ENCODE measurements at regions of chr9 and their contacts with region 1.

Region 1: DNA sequence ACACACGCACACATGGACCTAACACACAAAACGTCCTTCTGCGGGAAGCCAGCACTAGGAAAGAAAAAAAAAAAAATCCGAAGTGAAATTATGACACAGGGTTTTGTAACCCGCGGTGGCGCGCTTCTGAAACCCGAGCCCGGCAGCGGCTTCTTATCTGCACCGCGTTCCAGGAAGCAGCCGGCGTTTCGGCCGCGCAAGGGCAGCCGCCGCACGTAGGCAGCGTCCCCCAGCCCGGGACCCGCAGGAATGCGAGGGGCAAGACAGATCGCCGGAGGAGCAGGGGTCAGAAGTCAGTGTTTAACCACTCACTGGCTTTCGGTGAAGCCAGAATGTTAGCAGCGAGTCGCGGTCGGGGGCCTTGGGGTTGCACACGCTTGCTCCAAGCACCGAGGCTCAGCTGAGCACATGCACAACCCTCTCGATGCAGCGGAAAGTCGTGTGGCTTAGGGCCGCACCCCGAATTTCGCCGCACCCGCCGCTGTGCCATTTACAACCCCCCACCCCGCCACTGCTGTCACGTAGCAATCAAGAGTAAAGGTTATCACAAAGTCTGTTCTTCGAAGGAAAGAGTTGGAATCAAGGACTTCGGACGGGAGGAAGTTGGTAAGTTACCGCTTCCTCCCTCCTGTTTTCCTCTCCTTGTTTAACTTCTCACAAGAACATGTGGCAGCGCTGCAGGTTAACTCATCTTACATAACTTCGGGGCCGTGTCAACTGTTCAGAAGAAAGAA is 167.9 kb downstream of the AUH start:
- DNase-seq: peak; percentile 77
- H3K4me3 Mint-ChIP-seq: peak overlapping the region; percentile 71
- H3K27ac Mint-ChIP-seq: peak overlapping the region; percentile 95
- H3K4me1 Mint-ChIP-seq: peaks cover 80% of the 10 kb centered on the region
- H3K27me3 Mint-ChIP-seq: no peaks in the 10 kb centered on the region

Region 2: DNA sequence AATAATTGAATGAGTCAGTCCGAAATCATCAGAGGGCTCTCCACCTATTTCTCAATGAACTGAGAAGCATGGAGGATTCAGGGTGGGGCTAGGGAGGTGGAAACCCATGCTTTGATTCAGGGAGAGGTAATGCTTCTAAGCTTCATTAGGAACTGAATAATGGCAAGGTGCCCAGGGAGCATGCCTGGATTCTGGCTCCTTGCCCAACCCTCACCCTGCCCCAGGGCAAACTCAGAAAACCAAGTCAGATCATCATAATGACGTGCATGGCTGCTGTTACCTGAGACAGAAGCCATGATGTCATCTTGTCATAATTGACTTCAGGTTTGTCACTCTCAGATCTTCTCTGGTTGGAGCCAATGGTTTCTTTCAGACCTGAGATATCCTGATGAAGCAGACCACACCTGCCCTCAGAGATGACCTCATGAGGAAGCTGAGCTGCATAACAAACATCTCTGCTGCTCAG is 192.6 kb before region 1 on chr9:
- intact Hi-C with region 1: no loop called
- DNase-seq: no peak
- H3K4me3 Mint-ChIP-seq: no peak overlapping the region
- H3K27ac Mint-ChIP-seq: no peak overlapping the region
- H3K4me1 Mint-ChIP-seq: no peaks in the 10 kb centered on the region
- H3K27me3 Mint-ChIP-seq: peaks cover 2% of the 10 kb centered on the region

Region 3: GRCh38 chr9:91036826-91037510 is 156.9 kb before region 1 on chr9:
- intact Hi-C with region 1: loop called (anchors 1 kb)
- DNase-seq: peak; percentile 69
- H3K4me3 Mint-ChIP-seq: peak overlapping the region; percentile 35
- H3K27ac Mint-ChIP-seq: peak overlapping the region; percentile 70
- H3K4me1 Mint-ChIP-seq: peaks cover 61% of the 10 kb centered on the region
- H3K27me3 Mint-ChIP-seq: peaks cover 3% of the 10 kb centered on the region

Region 4: GRCh38 chr9:91101611-91102168 is 92.1 kb before region 1 on chr9:
- intact Hi-C with region 1: loop called (anchors 1 kb)
- DNase-seq: peak; percentile 85
- H3K4me3 Mint-ChIP-seq: peak overlapping the region; percentile 53
- H3K27ac Mint-ChIP-seq: peak overlapping the region; percentile 85
- H3K4me1 Mint-ChIP-seq: peaks cover 72% of the 10 kb centered on the region
- H3K27me3 Mint-ChIP-seq: peaks cover 8% of the 10 kb centered on the region

Region 5: DNA sequence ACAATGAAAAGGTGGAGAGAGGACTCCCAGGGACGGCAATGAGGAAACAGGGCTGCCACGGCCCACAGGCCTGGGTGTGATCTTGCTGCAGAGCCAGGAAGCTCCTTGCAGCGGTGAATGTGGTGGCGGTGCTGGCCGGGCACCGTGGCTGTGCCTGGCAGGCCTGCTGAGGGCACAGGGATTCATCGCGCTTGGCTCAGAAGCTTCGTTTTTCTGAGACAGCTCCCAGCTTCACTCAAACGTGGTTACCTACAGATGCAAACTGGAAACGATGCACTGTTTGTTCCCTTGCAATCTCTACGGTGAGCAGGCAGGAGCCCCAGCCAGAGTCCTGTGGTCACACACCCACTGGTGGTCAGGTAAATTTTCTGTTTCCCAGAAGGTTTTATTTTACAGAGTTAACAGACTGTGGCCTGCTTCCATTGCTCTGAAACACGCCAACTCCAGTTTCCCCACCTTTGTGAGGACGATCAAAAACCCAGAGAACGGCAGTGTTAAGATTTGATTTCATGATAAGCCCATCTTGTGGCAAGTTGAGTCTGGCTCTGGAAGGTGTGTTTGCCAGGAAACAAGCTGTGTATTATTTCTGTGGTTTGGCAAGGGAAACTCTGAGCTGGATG is 16.1 kb before region 1 on chr9:
- intact Hi-C with region 1: loop called (anchors 1 kb)
- DNase-seq: no peak
- H3K4me3 Mint-ChIP-seq: peak overlapping the region; percentile 35
- H3K27ac Mint-ChIP-seq: peak overlapping the region; percentile 96
- H3K4me1 Mint-ChIP-seq: peaks cover 71% of the 10 kb centered on the region
- H3K27me3 Mint-ChIP-seq: no peaks in the 10 kb centered on the region

Region 6: GRCh38 chr9:91346652-91347051 is 152.8 kb after region 1 on chr9:
- intact Hi-C with region 1: loop called (anchors 1 kb)
- DNase-seq: no peak
- H3K4me3 Mint-ChIP-seq: no peak overlapping the region
- H3K27ac Mint-ChIP-seq: peak overlapping the region; percentile 67
- H3K4me1 Mint-ChIP-seq: peaks cover 56% of the 10 kb centered on the region
- H3K27me3 Mint-ChIP-seq: no peaks in the 10 kb centered on the region

Region 7: DNA sequence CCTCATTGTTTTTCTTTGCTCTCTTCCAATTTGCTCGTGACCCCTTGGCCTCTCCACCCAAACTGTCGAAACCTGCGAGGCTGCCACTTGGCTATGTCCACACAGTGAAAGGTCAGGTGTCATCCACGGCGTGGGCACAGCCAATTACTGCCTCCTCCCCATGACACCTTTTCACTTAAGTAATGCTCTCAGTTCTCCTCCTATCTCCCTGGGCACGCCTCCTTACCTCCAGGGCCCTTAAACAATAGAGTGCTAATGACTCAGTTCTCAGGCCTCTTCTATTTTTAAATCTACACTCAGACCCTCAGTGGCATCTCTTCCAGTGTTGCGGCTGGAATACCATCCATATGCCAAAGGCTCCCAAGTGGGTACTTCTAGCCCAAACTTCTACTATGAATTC is 499.4 kb after region 1 on chr9:
- intact Hi-C with region 1: no loop called
- DNase-seq: no peak
- H3K4me3 Mint-ChIP-seq: no peak overlapping the region
- H3K27ac Mint-ChIP-seq: no peak overlapping the region
- H3K4me1 Mint-ChIP-seq: no peaks in the 10 kb centered on the region
- H3K27me3 Mint-ChIP-seq: peaks cover 7% of the 10 kb centered on the region

Region 8: DNA sequence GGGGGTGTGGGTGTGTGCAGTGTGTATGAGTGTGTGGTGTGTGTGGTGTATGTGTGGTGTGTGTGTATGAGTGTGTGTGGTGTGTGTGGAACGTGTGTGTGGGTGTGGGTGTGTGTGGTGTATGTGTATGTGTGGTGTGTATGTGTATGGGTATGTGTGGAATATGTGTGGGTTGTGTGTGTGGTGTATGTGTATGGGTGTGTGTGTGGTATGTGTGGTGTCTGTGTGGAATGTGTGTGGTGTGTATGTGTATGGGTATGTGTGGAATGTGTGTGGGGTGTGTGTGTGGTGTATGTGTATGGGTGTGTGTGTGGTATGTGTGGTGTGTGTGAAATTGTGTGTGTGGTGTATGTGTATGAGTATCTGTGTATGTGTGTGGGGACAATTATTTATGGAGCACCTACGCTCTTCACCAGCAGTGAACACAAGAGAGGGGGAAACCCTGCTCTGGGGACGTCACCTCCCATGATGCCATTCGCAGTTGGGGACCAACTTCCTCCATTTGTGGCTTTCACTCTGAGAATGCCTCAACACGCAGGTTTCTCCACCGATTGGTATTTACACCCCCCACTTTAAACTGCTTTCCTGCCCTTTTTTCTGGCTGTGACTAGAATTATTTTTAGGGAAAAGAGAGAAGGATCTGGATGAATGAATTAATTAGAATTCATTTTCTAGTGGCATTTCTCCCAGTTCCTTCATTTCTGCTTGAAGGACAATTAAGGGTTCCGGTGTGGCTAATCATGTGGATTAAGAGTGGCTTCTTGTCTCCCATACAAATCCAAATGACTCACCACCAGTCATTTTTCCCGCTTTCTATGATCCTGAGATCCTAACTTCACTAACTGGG is 518.2 kb after region 1 on chr9:
- intact Hi-C with region 1: loop called (anchors 1 kb)
- DNase-seq: peak; percentile 67
- H3K4me3 Mint-ChIP-seq: no peak overlapping the region
- H3K27ac Mint-ChIP-seq: no peak overlapping the region
- H3K4me1 Mint-ChIP-seq: no peaks in the 10 kb centered on the region
- H3K27me3 Mint-ChIP-seq: peaks cover 9% of the 10 kb centered on the region